Gastrocnemius medialis (tissue), 4 donors: ENCODE measurements at regions of chr5 and their contacts with region 1.

Region 1: DNA sequence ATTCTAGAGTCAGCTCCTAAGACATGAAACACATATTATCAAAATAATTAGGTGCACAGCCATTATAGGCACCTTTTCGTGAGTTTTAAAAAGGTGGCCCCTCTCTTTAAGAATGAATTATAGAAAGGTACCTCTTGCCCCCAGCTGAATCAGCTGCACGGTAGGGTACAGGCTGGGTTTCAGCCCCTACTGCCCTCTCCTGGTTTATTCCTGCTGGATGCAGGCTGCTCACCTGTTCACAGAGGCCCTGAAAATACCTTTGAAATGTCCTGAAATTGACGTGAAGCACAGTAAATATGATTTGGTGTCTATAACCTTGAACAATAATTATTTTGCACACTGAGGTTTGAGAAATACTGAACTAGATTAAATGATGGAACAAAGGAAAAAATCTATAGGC is 504.8 kb upstream of the SGCD start:
- DNase-seq: no peak
- ATAC-seq: no peak
- H3K4me3 ChIP-seq: no peak overlapping the region
- H3K27ac ChIP-seq: no peak overlapping the region
- H3K4me1 ChIP-seq: no peaks in the 10 kb centered on the region
- H3K27me3 ChIP-seq: no peaks in the 10 kb centered on the region
- CTCF ChIP-seq: peak in 2 of 5 experiments; percentile 31 to 37
- POLR2A ChIP-seq: no peak

Region 2: DNA sequence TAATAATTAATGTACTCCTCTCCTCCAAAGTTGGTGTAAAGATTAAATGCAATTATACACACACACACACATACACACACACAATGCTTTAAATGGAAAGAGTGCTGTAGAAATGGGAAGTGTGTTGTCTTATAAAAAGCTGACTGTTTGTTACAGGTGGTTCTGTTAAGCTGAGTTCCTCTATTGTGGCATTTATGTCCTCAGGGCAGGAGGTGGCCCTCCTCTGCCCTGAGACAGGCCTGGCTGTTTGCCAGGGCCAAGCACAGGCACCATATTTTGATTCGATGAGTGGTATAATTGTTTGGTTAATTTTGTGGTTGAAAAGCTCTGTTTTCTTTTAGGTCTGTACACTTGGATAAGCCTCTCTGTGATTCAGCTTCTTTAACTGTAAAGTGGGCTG is 234.7 kb before region 1 on chr5:
- in situ Hi-C with region 1: no loop called
- intact Hi-C with region 1: no loop called
- DNase-seq: no peak
- ATAC-seq: no peak
- H3K4me3 ChIP-seq: no peak overlapping the region
- H3K27ac ChIP-seq: no peak overlapping the region
- H3K4me1 ChIP-seq: no peaks in the 10 kb centered on the region
- H3K27me3 ChIP-seq: no peaks in the 10 kb centered on the region
- CTCF ChIP-seq: no peak
- POLR2A ChIP-seq: no peak

Region 3: DNA sequence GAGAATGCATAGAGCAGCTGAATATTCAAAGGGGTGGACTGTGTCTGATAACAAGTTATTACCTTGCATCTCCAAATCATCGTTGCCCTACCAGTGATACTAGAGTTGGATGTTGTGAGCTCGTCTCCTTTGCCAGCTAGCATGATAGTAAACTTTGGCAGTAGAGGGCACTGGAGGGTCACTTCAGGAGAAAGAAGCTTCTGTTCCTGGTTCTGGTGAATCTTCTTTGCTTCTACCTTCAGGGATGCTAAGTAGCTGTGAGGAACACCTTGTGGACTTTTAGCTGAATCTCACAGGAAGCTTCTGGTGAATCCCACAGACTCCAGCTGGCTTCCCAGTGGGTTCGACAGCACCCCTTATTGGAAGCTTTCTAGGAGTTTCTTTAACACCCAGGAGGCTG is 121.8 kb before region 1 on chr5:
- in situ Hi-C with region 1: no loop called
- intact Hi-C with region 1: loop called (anchors 5 kb)
- DNase-seq: no peak
- ATAC-seq: peak in 1 of 2 donors; percentile 36
- H3K4me3 ChIP-seq: no peak overlapping the region
- H3K27ac ChIP-seq: no peak overlapping the region
- H3K4me1 ChIP-seq: no peaks in the 10 kb centered on the region
- H3K27me3 ChIP-seq: no peaks in the 10 kb centered on the region
- CTCF ChIP-seq: peak in 3 of 5 experiments; percentile 10 to 25 (median 22)
- POLR2A ChIP-seq: no peak

Region 4: DNA sequence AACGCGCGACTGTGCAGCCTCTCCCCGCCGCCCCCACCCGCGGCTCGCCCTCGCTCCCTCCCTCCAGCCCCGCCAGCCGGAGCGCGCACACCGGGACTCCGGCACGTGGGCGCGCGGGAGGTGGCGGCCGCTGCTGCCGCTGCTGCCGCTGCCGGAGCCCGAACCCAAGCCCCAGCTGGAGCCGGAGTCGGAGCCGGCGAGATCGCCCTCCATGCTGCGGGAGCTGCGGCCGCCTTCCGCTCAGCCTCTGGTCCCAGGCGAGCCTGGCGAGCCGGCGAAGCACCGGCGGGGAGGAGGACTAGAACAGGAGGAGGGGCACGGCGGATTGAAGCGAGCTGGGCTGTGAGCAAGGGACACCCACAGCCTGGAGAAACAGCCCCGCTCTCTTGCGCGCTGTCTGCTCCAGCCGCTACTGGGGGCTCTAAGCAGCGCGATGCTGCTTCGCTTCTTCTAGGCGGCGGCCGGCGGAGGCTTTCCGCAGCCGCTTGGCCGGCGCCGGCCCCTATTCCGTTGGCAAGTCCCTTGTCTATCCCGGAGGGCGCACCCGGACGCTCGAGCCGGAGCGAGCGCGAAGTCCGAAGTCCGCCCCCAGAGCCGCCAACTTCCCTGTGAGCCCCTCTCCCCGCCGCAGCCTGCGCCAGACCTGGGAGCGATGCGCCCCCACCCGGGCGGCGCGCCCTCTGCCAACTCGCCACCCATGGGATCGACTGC is 93.9 kb before region 1 on chr5:
- in situ Hi-C with region 1: no loop called
- intact Hi-C with region 1: loop called (anchors 5 kb)
- DNase-seq: peak in 1 of 2 donors; percentile 38
- ATAC-seq: peak; percentile 32 to 40
- H3K4me3 ChIP-seq: peak overlapping the region; percentile 59 to 79 (median 63)
- H3K27ac ChIP-seq: peak overlapping the region; percentile 56 to 77 (median 69)
- H3K4me1 ChIP-seq: peaks cover 24 to 39% of the 10 kb centered on the region in 2 donors
- H3K27me3 ChIP-seq: peaks cover 0 to 11% (median 0%) of the 10 kb centered on the region in 3 donors
- CTCF ChIP-seq: no peak
- POLR2A ChIP-seq: no peak